CD8-positive, alpha-beta T cell (primary cell): ENCODE measurements at regions of chr2 and their contacts with region 1.

Region 1: DNA sequence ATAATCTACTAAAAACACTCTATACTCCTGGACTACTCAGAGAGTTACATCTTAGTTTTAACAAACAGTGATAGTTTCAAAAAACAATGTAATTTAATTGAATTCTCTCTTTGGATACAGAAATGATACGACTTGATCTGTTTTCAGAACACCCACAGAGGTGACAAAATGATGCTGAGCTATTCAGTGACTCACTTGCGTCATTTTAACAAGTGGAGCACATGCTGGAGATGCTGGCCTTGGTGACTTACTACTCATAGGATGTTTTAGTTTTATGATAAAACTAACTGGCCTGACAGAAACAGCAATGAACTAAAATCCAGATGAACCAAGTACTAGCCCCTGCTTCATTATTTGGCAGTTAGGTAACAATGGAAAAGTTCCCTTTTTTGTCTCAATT is 101.3 kb upstream of the ITGB6 start:
- DNase-seq: peak in 1 of 9 experiments; percentile 9
- ATAC-seq: peak; percentile 26
- H3K4me3 ChIP-seq: no peak overlapping the region
- H3K4me3 Mint-ChIP-seq: no peak overlapping the region
- H3K27ac ChIP-seq: no peak overlapping the region
- H3K27ac Mint-ChIP-seq: peak overlapping the region; percentile 28
- H3K4me1 ChIP-seq: peaks cover 16% of the 10 kb centered on the region
- H3K4me1 Mint-ChIP-seq: peaks cover 57% of the 10 kb centered on the region
- H3K27me3 ChIP-seq: no peaks in the 10 kb centered on the region
- H3K27me3 Mint-ChIP-seq: no peaks in the 10 kb centered on the region
- CTCF ChIP-seq: no peak

Region 2: DNA sequence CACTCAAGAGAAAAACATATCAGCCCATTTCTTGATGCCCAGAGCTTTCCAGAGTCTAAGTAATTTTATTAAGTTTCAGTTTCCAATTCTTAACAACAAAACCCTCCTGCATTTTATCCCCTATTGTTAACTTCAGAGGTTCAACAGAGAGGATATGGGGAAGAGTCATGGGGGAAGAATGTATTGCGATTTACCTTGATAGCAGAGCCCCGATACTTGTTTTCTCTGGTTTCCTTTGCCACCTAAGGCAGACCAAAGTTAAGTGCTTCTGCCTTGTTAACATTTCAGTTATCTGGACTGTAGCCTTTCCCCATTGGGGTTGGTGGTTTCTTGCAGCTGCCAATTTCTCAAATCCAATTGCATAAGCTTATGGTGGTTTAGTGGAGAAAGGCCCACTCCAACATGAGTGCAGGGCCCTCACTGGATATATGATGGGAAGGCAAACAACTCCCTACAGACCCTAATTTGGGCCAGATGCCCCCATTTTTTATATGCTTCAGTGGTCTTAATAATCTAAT is 19.3 kb before region 1 on chr2:
- CTCF ChIA-PET with region 1: no interaction called
- POLR2A ChIA-PET with region 1: no interaction called
- intact Hi-C with region 1: loop called in 1 of 2 experiments (anchors 2 kb)
- DNase-seq: no peak
- ATAC-seq: no peak
- H3K4me3 ChIP-seq: no peak overlapping the region
- H3K4me3 Mint-ChIP-seq: no peak overlapping the region
- H3K27ac ChIP-seq: no peak overlapping the region
- H3K27ac Mint-ChIP-seq: peak overlapping the region; percentile 67
- H3K4me1 ChIP-seq: peaks cover 4% of the 10 kb centered on the region
- H3K4me1 Mint-ChIP-seq: peaks cover 22% of the 10 kb centered on the region
- H3K27me3 ChIP-seq: no peaks in the 10 kb centered on the region
- H3K27me3 Mint-ChIP-seq: no peaks in the 10 kb centered on the region
- CTCF ChIP-seq: no peak

Region 3: DNA sequence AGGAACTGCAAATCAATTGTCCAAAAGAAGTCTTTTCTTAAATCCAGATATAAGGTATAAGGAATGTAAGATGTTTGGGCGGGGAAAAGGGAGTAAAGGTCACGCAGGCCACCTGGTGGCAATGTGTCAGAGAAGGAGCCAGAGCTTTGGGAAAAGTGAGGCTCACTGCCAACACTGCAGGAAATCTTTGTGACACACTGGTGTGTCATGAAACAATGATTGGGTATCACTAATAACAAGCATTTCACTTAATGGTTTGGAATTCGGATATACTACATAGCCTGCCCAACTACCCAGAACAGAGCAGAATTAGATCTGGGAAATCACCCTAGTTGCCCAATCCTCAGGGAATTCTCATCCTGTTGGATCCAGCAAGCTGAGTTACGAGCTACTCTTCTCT is 131.2 kb after region 1 on chr2:
- CTCF ChIA-PET with region 1: no interaction called
- POLR2A ChIA-PET with region 1: no interaction called
- intact Hi-C with region 1: no loop called
- DNase-seq: no peak
- ATAC-seq: no peak
- H3K4me3 ChIP-seq: no peak overlapping the region
- H3K4me3 Mint-ChIP-seq: no peak overlapping the region
- H3K27ac ChIP-seq: no peak overlapping the region
- H3K27ac Mint-ChIP-seq: no peak overlapping the region
- H3K4me1 ChIP-seq: peaks cover 31% of the 10 kb centered on the region
- H3K4me1 Mint-ChIP-seq: peaks cover 65% of the 10 kb centered on the region
- H3K27me3 ChIP-seq: no peaks in the 10 kb centered on the region
- H3K27me3 Mint-ChIP-seq: no peaks in the 10 kb centered on the region
- CTCF ChIP-seq: no peak

Region 4: GRCh38 chr2:160803881-160804280 is 502.5 kb after region 1 on chr2:
- CTCF ChIA-PET with region 1: no interaction called
- POLR2A ChIA-PET with region 1: no interaction called
- intact Hi-C with region 1: loop called in 1 of 2 experiments (anchors 1 kb)
- DNase-seq: peak in 2 of 9 experiments; percentile 4 to 28
- ATAC-seq: peak; percentile 34
- H3K4me3 ChIP-seq: no peak overlapping the region
- H3K4me3 Mint-ChIP-seq: no peak overlapping the region
- H3K27ac ChIP-seq: no peak overlapping the region
- H3K27ac Mint-ChIP-seq: no peak overlapping the region
- H3K4me1 ChIP-seq: peaks cover 4% of the 10 kb centered on the region
- H3K4me1 Mint-ChIP-seq: peaks cover 6% of the 10 kb centered on the region
- H3K27me3 ChIP-seq: no peaks in the 10 kb centered on the region
- H3K27me3 Mint-ChIP-seq: no peaks in the 10 kb centered on the region
- CTCF ChIP-seq: no peak